Common myeloid progenitor, CD34-positive (primary cell): ENCODE measurements at regions of chr16 and their contacts with region 1.

Region 1: DNA sequence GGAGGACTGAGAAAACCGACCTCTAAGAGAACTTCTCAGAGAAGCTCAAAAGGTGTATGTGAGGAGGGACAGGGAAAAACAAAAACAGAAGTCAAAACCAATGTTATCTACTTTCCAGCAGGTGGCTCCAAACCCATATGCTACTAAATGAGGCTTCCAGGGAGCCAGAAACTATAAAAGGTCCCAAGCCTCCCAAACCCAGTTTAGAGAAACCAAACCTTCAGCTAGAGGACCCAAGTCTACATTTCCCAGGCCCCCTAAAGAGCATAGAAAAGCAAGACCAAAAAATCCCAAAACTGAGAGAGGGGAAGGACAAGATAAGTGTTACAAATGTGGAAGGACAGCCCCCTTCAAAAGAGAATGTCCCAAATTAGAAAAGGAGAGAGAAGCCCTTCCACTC is 3.7 kb downstream of the HPR start:
- DNase-seq: peak; percentile 43 to 71 (median 64)
- H3K4me3 ChIP-seq: no peak overlapping the region
- H3K27ac ChIP-seq: no peak overlapping the region
- H3K4me1 ChIP-seq: no peaks in the 10 kb centered on the region
- H3K27me3 ChIP-seq: no peaks in the 10 kb centered on the region

Region 2: DNA sequence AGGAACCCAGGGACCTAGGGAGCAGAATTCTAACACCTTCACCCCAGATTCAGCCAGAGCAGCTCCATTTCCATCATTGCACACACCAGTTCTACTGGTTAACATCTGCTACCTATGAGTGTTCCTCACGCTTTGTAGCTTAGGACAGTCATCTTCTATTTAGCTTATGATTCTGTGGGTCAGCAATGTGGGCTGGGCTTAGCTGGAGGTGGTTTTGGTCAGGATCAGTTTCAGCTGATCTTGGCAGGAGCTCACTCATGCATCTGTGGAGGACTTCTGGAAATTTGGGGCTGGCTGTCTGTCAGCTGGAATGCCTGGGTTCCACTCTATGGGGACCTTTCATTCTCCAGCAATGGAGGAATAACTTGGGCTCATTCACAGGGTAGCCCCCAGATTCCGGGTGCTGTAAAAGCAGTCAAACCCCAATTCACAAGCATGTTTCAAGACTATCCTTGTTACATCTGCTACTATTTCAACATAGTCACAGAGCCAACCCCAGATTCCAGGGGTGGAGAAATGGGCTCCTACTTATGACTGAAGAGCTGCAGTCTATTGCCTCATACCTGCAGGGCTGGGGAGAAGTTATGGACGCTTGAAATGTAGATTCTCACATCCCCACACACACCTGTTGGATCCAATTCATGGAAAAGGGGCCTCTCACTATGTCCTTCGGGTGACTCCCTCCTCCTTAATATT is 15.8 kb before region 1 on chr16:
- CTCF ChIA-PET with region 1: no interaction called
- POLR2A ChIA-PET with region 1: no interaction called
- DNase-seq: no peak
- H3K4me3 ChIP-seq: no peak overlapping the region
- H3K27ac ChIP-seq: no peak overlapping the region
- H3K4me1 ChIP-seq: peaks cover 0 to 22% (median 5%) of the 10 kb centered on the region in 4 experiments
- H3K27me3 ChIP-seq: no peaks in the 10 kb centered on the region

Region 3: DNA sequence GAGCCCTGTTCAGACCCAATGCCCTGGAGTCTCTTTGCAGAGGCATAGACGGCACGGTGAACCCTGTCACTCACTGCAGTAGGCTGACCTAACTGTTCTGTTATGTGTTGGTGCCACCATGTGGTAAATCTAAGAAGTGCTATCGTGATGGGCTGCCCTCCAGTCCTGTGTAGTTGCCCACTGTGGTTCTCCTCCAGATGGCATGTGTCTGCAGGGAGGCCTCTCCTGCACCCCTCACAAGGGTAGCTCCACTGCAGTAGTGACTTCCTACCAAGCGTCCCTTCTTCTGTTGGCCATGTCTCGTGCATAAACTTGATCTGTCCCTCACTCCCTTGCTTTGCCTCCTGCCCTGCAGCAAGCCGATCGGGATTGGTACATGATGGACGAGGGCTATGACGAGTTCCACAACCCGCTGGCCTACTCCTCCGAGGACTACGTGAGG is 32.7 kb after region 1 on chr16:
- CTCF ChIA-PET with region 1: interaction called, 33 read pairs
- POLR2A ChIA-PET with region 1: no interaction called
- DNase-seq: peak; percentile 67 to 84 (median 78)
- H3K4me3 ChIP-seq: no peak overlapping the region
- H3K27ac ChIP-seq: no peak overlapping the region
- H3K4me1 ChIP-seq: peaks cover 6 to 11% (median 7%) of the 10 kb centered on the region in 4 experiments
- H3K27me3 ChIP-seq: no peaks in the 10 kb centered on the region